ENCODE measurements at regions of chr17 and their contacts with region 1.

Region 1: DNA sequence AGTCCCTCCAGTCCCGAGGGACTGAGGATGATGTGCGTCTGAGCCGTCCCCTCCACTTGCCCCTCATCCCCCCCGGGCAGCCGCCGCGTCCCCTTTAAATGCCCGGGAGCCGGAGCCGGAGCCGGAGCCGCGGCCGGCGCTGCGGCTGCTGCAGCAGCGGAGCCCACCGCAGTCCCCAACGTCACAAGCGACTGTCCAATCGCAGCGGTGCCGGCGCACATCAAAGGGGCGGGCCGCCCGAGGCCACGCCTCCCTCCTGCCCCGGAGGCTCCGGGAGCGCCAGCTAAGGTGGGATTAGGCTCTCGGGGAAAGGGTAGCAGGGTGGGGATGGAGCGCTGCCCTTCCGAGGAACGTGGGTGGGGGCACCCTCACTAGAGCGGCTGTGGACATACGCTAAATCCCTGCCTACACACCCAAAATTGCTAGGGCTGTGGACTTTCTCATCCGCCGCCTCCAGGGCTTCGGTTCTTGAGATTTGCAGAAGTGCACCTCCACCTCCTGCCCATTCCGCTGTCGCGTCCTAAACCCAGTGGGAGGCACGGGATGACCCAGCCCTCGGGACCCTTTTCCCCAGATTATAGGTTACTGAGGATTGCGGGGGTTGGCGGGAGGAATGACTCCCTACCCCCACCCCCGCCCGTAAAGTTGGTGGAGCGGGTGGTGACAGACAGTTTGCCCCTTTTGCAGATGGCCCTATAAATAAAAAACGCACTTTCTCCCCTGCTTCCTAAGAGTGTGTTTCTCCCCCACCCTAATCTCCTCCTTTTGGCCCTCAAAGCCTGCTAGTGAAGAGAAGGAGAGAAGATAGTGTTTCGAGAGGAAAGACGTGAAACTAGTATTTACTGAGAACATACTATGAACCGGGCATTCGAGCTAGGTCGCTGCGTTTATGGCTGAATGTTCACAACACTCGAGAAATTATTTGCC is at the start of gene PHOSPHO1:
- DNase-seq: peak; percentile 91
- ATAC-seq: peak; percentile 88
- H3K4me3 Mint-ChIP-seq: peak within 1 kb of the TSS; percentile 79
- H3K27ac Mint-ChIP-seq: peak within 1 kb of the TSS; percentile 75
- H3K4me1 Mint-ChIP-seq: peaks cover 40% of the 10 kb centered on the region
- H3K27me3 Mint-ChIP-seq: peaks cover 19% of the 10 kb centered on the region
- total RNA-seq, gene PHOSPHO1: not detected

Region 2: GRCh38 chr17:49210158-49211029 is 20.5 kb before region 1 on chr17 and contains the starts of genes ABI3 and GNGT2:
- CTCF ChIA-PET with region 1: interaction called, 77 read pairs
- POLR2A ChIA-PET with region 1: interaction called, 17 read pairs
- DNase-seq: peak; percentile 84
- ATAC-seq: peak; percentile 83
- H3K4me3 Mint-ChIP-seq: peak within 1 kb of the TSS; percentile 96
- H3K27ac Mint-ChIP-seq: peak within 1 kb of the TSS; percentile 89
- H3K4me1 Mint-ChIP-seq: peaks cover 62% of the 10 kb centered on the region
- H3K27me3 Mint-ChIP-seq: no peaks in the 10 kb centered on the region
- total RNA-seq, gene ABI3: 110 to 117 TPM
- total RNA-seq, gene GNGT2: 40.0 to 45.4 TPM

Region 3: GRCh38 chr17:49217651-49218413 is 13.1 kb before region 1 on chr17:
- CTCF ChIA-PET with region 1: interaction called, 77 read pairs
- POLR2A ChIA-PET with region 1: interaction called, 6 read pairs
- DNase-seq: peak; percentile 90
- ATAC-seq: peak; percentile 77
- H3K4me3 Mint-ChIP-seq: peak overlapping the region; percentile 77
- H3K27ac Mint-ChIP-seq: peak overlapping the region; percentile 98
- H3K4me1 Mint-ChIP-seq: peaks cover 82% of the 10 kb centered on the region
- H3K27me3 Mint-ChIP-seq: no peaks in the 10 kb centered on the region

Region 4: GRCh38 chr17:49646391-49647255 is 415.7 kb after region 1 on chr17:
- CTCF ChIA-PET with region 1: no interaction called
- POLR2A ChIA-PET with region 1: no interaction called
- DNase-seq: peak; percentile 42
- ATAC-seq: peak; percentile 76
- H3K4me3 Mint-ChIP-seq: peak overlapping the region; percentile 22
- H3K27ac Mint-ChIP-seq: peak overlapping the region; percentile 60
- H3K4me1 Mint-ChIP-seq: peaks cover 28% of the 10 kb centered on the region
- H3K27me3 Mint-ChIP-seq: no peaks in the 10 kb centered on the region

Region 5: DNA sequence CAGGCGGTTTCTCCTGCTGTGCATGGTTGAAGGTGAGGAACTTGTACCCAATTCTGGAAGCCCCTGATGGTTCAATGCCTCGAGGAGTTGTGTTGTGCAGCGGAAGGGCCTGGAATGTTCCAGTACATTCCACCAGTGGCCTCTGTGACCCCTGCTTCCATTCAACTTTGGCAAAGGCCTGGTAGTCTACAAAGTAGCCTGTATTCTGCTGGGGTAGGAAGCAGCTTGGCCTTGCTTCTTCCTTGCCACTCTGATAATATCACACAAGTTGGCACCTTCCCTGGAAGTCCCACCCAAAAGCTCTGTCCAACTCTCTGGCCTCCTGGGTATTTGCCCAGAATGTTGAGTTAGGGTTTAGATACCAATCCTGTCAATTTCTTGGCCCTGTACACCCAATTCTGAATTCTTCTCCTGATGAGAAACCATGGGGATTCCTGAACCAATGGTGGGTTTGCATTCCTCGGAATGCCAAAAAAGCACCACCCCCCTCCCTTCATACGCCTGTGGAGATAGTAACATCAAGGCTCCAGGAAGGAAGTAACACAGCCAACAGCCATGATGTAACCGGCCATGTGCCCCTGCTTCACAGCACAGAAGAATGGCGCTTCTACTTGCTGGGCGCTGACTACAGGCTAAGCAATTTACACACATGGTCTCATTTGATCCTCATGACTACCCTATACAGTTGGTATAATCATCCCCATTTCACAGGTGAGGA is 544.8 kb after region 1 on chr17:
- CTCF ChIA-PET with region 1: no interaction called
- POLR2A ChIA-PET with region 1: no interaction called
- DNase-seq: no peak
- ATAC-seq: no peak
- H3K4me3 Mint-ChIP-seq: no peak overlapping the region
- H3K27ac Mint-ChIP-seq: no peak overlapping the region
- H3K4me1 Mint-ChIP-seq: peaks cover 5% of the 10 kb centered on the region
- H3K27me3 Mint-ChIP-seq: peaks cover 2% of the 10 kb centered on the region